HepG2 (cell line): ENCODE measurements at regions of chr6 and their contacts with region 1.

Region 1: DNA sequence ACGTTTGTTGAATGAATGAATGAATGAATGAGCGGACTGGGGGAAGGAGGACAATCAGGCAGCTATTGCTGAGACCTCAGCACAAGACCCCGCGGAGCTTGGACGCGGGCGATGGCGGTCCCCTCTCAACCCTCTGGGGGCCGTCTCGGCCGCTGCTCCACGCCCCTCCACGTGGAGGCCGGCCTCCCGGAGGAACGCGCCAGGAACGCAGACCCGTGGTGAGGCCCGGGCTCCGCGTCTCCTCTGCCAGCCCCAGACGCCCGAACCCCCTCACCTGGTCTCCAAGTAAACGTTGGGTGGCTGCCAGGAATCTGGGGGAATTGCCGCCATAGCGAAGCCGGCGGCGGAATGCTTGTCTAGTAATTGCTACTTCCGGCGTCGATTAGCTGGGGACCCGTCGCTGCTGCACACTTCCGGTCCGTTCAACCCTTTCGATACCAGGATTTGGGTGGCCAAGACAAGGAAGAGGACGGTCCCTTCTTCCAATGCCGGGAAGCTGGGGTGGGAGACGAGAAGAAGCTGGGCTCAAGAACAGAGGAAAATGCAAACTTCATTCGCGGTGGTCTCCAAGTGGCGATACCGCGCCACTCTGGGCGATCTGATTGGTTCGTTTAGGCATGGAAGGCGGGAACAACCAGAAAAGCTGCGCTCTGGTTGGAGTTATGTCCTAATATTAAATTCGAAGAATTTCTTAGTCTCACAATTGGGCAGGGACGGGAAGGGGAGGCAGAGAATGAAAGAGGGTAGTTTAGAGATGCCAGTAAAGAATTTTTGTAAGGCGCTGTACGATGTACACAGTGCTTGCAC is at the start of gene PPIL1:
- DNase-seq: peak; percentile 90
- ATAC-seq: peak; percentile 91
- H3K4me3 ChIP-seq: peak within 1 kb of the TSS; percentile 79 to 94 (median 83)
- H3K27ac ChIP-seq: peak within 1 kb of the TSS; percentile 83
- H3K4me1 ChIP-seq: peaks cover 49% of the 10 kb centered on the region
- H3K27me3 ChIP-seq: peaks cover 0 to 13% of the 10 kb centered on the region in 2 experiments; a peak in 2 of 5 replicates
- CTCF ChIP-seq: no peak
- EP300 ChIP-seq: no peak
- POLR2A ChIP-seq: peak; percentile 67 to 78; a peak in 3 of 4 replicates
- RAD21 ChIP-seq: peak; percentile 51; the same call in 1 of the 2 replicates
- total RNA-seq, gene PPIL1: 144 and 202 TPM in 2 replicates

Region 2: DNA sequence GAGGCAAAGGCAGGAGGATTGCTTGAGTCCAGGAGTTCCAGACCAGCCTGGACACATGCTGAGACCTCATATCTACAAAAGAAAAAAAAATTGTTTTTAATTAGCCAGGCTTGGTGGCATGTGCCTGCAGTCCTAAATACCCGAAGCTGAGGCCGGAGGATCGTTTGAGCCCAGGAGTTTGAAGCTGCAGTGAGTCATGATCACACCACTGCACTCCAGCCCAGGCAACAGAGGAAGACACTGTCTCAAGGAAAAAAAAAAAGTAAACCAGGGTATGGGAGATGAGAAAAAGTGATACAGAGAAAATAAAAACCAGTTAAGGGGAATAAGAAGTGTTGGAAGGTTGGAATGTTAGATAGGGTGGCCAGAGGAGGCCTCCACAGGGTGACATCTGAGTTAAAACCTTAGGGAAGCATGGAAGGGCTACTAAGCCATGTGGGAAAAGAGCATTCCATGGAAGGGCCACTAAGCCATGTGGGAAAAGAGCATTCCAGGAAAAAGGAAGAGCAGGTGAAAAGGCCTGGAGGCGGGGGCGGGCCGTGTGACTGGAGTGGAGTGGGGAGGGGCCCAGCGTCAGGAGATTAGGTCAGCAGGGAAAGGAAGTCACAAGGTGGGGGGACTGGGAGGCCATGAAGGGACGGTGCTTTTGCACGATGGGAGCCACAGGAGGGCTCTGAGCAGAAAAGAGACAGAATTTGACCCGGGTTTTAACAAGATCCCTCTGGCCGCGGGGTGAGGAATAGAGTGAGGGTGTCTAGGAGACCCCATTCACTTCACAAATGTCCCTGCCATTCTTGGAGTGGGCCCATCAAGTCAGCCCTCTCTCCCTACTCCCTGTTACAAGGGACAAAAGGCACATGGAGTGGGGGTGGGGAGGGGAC is 53.7 kb before region 1 on chr6:
- CTCF ChIA-PET with region 1: no interaction called
- POLR2A ChIA-PET with region 1: interaction called, 14 read pairs
- in situ Hi-C with region 1: no loop called
- intact Hi-C with region 1: no loop called
- DNase-seq: no peak
- ATAC-seq: 0 out of 3 replicates have a peak, but pooled peaks have one; percentile 3
- H3K4me3 ChIP-seq: no peak overlapping the region
- H3K27ac ChIP-seq: no peak overlapping the region
- H3K4me1 ChIP-seq: peaks cover 96% of the 10 kb centered on the region
- H3K27me3 ChIP-seq: peaks cover 13 to 54% of the 10 kb centered on the region in 2 experiments; a peak in 4 of 5 replicates
- CTCF ChIP-seq: no peak
- EP300 ChIP-seq: no peak
- POLR2A ChIP-seq: no peak
- RAD21 ChIP-seq: no peak

Region 3: DNA sequence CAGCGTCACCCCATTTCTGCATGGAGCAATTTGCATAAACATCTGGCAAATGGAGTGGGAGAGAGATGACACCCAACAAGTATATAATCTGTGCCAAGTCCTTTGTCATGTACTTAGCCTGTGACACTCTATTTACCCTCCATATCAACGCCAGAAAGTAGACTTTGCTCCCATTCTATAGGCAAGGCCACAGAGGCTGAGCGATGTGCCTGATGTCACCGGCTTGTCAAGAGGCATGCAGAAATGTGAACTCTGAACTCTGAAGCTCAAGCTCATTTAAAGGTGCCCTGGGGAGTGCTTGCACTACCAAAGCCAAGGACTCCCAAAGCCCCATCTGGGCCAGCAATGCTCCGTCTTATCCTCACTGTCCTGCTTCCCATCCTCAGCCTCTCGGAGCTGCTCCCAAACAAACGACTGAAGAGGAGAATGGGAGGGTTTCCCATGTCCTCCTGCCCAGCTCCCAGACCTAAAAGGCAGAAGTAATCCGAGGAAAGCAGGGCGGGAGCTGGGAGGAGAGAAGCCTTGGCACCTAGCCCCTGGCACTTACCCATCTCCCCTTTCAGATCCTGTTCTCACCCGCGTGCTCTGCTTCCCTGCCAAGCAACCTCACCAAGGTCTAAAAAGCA is 44.6 kb before region 1 on chr6:
- CTCF ChIA-PET with region 1: no interaction called
- POLR2A ChIA-PET with region 1: interaction called, 7 read pairs
- in situ Hi-C with region 1: no loop called
- intact Hi-C with region 1: loop called (anchors 2 kb)
- DNase-seq: peak; percentile 98
- ATAC-seq: peak; percentile 87
- H3K4me3 ChIP-seq: peak overlapping the region; percentile 7 to 60 (median 10); a peak in 4 of 6 replicates
- H3K27ac ChIP-seq: peak overlapping the region; percentile 71
- H3K4me1 ChIP-seq: peaks cover 95% of the 10 kb centered on the region
- H3K27me3 ChIP-seq: peaks cover 2 to 15% of the 10 kb centered on the region in 2 experiments; a peak in 2 of 5 replicates
- CTCF ChIP-seq: no peak
- EP300 ChIP-seq: peak; percentile 81 to 82; a peak in 3 of 4 replicates
- POLR2A ChIP-seq: peak in 1 of 2 experiments; percentile 45; a peak in 2 of 4 replicates
- RAD21 ChIP-seq: no peak

Region 4: GRCh38 chr6:36851149-36851614 is 23.5 kb before region 1 on chr6:
- CTCF ChIA-PET with region 1: no interaction called
- POLR2A ChIA-PET with region 1: interaction called, 29 read pairs
- in situ Hi-C with region 1: no loop called
- intact Hi-C with region 1: no loop called
- DNase-seq: peak; percentile 69
- ATAC-seq: no peak; the same call in 2 of the 3 replicates
- H3K4me3 ChIP-seq: no peak overlapping the region
- H3K27ac ChIP-seq: no peak overlapping the region
- H3K4me1 ChIP-seq: peaks cover 35% of the 10 kb centered on the region
- H3K27me3 ChIP-seq: no peaks in the 10 kb centered on the region
- CTCF ChIP-seq: peak; percentile 88
- EP300 ChIP-seq: no peak
- POLR2A ChIP-seq: no peak
- RAD21 ChIP-seq: peak; percentile 87

Region 5: GRCh38 chr6:36885461-36886401 is 11.1 kb after region 1 on chr6 and contains the start of gene C6orf89:
- CTCF ChIA-PET with region 1: interaction called, 5 read pairs
- POLR2A ChIA-PET with region 1: interaction called, 61 read pairs
- in situ Hi-C with region 1: no loop called
- intact Hi-C with region 1: no loop called
- DNase-seq: peak; percentile 99
- ATAC-seq: peak; percentile 99
- H3K4me3 ChIP-seq: peak within 1 kb of the TSS; percentile 77 to 82 (median 77)
- H3K27ac ChIP-seq: peak within 1 kb of the TSS; percentile 74
- H3K4me1 ChIP-seq: peaks cover 15% of the 10 kb centered on the region
- H3K27me3 ChIP-seq: no peaks in the 10 kb centered on the region; a peak in 2 of 5 replicates
- CTCF ChIP-seq: peak; percentile 98
- EP300 ChIP-seq: peak in 1 of 2 experiments; percentile 55; a peak in 2 of 4 replicates
- POLR2A ChIP-seq: peak; percentile 42 to 63; a peak in 3 of 4 replicates
- RAD21 ChIP-seq: peak; percentile 63; the same call in 1 of the 2 replicates
- total RNA-seq, gene C6orf89: 23.9 and 32.2 TPM in 2 replicates

Region 6: DNA sequence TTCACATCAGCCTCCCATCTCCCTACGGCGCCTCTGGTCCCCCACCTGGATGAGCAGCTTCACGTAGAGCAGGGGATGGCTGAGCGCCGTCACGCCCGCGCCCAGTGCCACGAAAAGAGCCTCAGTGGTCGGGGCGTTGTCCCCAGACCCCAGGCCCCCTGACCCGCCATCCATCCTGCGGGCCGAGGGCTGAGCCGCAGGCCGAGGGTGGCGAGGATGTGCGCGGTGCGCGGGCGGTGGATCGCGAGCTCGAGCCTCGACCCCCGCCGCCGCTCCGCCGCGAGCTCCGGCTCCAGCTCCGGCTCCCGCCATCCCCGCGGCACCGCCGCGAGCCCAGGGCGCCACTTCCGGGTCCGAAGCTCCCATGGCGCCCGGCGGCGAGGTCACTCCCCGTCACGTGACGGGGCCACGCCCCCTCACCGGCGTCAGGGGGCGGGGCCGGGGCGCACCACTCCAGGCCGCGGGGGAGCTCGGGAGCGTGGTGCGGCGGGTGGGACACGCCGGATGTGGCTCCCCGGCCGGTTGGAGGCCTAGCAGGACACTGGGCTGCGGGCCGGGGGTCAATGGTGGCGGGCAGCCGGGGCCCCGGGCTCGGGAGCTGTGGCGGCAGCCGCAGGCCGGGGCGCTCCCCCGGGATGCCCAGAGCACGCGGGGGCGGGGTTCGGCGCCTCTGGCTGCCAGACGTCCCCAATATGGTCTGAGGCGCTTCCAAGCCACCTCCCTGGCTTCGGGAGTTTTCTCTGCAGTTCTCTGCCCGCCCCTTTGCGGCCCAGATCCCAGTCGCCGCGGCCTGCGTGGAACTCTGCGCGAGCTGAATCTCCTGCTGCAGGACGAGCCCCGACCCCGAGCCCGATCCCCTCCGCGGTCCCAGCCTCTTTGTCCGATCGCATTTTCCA is 111.4 kb after region 1 on chr6 and contains the start of gene MTCH1:
- CTCF ChIA-PET with region 1: no interaction called
- POLR2A ChIA-PET with region 1: interaction called, 17 read pairs
- in situ Hi-C with region 1: no loop called
- intact Hi-C with region 1: no loop called
- DNase-seq: peak; percentile 81
- ATAC-seq: peak; percentile 92
- H3K4me3 ChIP-seq: peak within 1 kb of the TSS; percentile 71 to 99 (median 91)
- H3K27ac ChIP-seq: peak within 1 kb of the TSS; percentile 74
- H3K4me1 ChIP-seq: peaks cover 30% of the 10 kb centered on the region
- H3K27me3 ChIP-seq: peaks cover 2 to 15% of the 10 kb centered on the region in 2 experiments; a peak in 3 of 5 replicates
- CTCF ChIP-seq: no peak
- EP300 ChIP-seq: peak in 1 of 2 experiments; percentile 35; a peak in 2 of 4 replicates
- POLR2A ChIP-seq: peak; percentile 92 to 94
- RAD21 ChIP-seq: peak; percentile 69; the same call in 1 of the 2 replicates
- total RNA-seq, gene MTCH1: 115 and 144 TPM in 2 replicates